Heart right ventricle (tissue), 16 donors: ENCODE measurements at regions of chr1 and their contacts with region 1.

Region 1: DNA sequence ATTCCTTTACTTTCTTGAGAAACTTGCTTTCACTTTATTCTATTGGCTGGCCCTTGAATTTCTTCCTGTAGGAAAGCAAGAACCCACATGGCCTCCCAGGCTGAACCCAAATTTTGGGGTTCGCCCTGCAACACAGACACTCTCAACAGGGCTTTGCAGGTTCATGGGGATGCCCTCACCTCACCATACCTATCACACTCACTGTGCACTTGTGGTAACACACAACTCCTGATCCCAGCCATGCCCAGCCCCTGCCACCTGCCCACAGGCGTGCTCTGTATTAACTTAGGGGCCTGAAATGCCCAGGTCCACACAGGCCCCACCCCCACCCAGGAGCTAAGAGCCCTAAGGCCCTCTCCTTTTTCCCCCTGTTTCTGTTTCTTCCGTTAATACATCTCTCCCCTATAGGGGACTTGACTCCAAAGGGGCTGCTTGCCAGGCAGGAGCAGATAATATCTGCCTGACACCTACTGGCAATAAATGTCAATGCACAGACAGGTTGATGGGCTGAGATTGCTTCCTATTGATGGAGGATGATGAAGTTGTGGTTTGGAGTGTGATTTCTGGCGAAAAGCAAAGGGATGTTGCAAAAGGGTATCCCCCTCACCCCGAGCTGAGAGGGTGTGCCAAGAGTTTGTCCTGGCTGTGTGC is 171.5 kb downstream of the AJAP1 start:
- DNase-seq: no peak
- ATAC-seq: peak in 2 of 8 donors; percentile 20 to 33
- H3K4me3 ChIP-seq: no peak overlapping the region
- H3K27ac ChIP-seq: no peak overlapping the region
- H3K4me1 ChIP-seq: no peaks in the 10 kb centered on the region
- H3K27me3 ChIP-seq: peaks cover 0 to 28% (median 7%) of the 10 kb centered on the region in 7 donors
- CTCF ChIP-seq: peak in 7 of 9 donors; percentile 29 to 40 (median 37)

Region 2: GRCh38 chr1:3910857-3911845 is 914.8 kb before region 1 on chr1:
- intact Hi-C with region 1: loop called in 1 of 10 experiments (anchors 10 kb)
- DNase-seq: peak; percentile 52 to 70
- ATAC-seq: peak in 7 of 8 donors; percentile 41 to 79 (median 72)
- H3K4me3 ChIP-seq: no peak overlapping the region
- H3K27ac ChIP-seq: no peak overlapping the region
- H3K4me1 ChIP-seq: peaks cover 0 to 5% (median 0%) of the 10 kb centered on the region in 9 donors
- H3K27me3 ChIP-seq: peaks cover 0 to 44% (median 30%) of the 10 kb centered on the region in 7 donors
- CTCF ChIP-seq: peak; percentile 34 to 75 (median 70)

Region 3: DNA sequence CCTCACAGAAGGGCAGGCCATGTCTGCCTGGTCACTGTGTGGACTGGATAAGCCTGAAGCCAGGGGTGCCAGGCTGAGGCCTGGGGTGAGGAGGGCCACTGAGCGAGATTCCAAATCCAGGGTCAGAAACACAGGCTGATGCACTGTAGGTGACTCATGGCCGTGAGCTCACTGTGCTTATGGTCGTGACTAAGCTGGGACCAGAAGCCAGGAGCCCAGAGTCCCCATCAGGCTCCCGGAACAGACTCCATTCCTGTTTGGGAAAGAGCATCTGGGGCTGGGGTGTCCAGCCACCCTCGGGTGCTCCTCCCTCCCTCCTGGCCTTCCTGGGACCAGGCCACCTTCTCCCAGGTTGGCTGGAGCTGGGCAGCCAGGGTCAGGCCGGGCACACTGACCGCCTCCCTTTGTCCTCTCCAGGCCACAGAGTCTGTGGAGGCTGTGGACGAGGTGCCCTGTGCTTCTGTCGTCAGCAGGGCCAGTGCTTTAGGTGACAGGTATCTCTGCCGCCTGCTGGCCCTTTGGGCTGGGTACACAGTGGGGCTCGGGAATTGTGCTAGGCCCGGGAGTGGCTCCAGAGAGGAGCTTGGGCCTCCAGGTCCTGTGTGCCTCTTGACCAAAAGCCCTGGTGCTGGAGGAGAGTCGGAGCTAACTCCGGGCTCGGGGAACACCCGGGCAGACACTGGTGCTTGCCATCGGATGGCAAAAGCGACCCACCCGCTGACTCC is 134.8 kb before region 1 on chr1:
- intact Hi-C with region 1: no loop called
- DNase-seq: no peak
- ATAC-seq: no peak
- H3K4me3 ChIP-seq: no peak overlapping the region
- H3K27ac ChIP-seq: no peak overlapping the region
- H3K4me1 ChIP-seq: no peaks in the 10 kb centered on the region
- H3K27me3 ChIP-seq: peaks cover 0 to 24% (median 10%) of the 10 kb centered on the region in 7 donors
- CTCF ChIP-seq: no peak